ENCODE measurements at regions of chrX and their contacts with region 1.

Region 1: DNA sequence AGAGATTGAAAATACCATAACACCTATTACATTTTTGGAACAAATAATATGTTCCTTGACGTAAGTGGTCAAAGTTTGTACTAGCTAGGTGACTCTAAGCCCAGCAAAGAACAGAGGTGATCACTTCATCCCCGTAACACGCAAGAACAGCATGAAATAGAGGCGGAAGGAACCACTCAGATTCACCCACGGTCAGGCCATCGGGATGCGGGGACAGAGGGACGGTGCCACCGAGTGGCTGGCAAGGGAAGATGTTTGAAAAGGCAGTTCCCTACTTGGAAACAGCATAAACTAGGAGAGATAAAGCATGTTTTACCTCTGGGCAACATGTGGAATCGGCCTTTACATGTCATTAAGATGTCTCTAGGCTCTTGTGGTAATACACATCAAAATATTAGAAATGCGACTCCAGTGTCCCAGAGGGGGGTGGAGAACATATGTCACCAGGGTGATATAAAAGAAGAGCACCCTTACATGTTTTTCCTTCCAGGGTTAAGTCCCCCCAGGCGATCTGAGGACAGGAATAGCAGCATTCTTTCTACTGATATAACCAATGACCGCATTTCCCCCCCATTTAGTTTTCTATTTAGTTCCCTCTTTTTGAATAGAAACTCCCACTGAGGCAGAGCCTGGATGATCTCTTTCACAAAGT is 84.0 kb downstream of the PHKA2 start:
- DNase-seq: peak in 1 of 2 experiments; percentile 15
- H3K4me3 ChIP-seq: no peak overlapping the region
- H3K27ac ChIP-seq: no peak overlapping the region
- H3K4me1 ChIP-seq: no peaks in the 10 kb centered on the region
- H3K27me3 ChIP-seq: no peaks in the 10 kb centered on the region
- CTCF ChIP-seq: peak; percentile 45; the same call in 1 of the 2 replicates

Region 2: DNA sequence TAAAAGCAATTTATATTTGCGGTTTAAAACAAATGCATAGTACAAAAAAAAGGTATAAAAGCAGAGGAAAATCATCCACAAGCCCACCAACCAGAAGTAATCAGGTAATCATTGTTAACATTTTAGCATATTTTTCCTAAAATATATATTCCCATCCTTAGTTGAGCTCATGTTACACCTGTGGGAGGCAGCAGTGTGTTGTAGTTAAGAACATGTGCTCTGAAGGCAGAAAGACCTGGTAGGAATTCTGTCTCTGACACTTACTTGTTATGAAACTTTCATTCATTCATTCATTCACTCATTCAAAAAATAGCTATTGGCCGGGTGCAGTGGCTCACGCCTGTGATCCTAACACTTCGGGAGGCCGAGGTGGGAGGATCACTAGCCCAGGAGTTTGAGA is 489.9 kb before region 1 on chrX:
- CTCF ChIA-PET with region 1: no interaction called
- POLR2A ChIA-PET with region 1: no interaction called
- intact Hi-C with region 1: loop called (anchors 5 kb)
- DNase-seq: no peak
- H3K4me3 ChIP-seq: no peak overlapping the region
- H3K27ac ChIP-seq: no peak overlapping the region
- H3K4me1 ChIP-seq: no peaks in the 10 kb centered on the region
- H3K27me3 ChIP-seq: no peaks in the 10 kb centered on the region
- CTCF ChIP-seq: peak; percentile 56

Region 3: GRCh38 chrX:18938710-18939109 is 38.8 kb after region 1 on chrX:
- CTCF ChIA-PET with region 1: no interaction called
- POLR2A ChIA-PET with region 1: no interaction called
- intact Hi-C with region 1: no loop called
- DNase-seq: peak in 1 of 2 experiments; percentile 39
- H3K4me3 ChIP-seq: no peak overlapping the region
- H3K27ac ChIP-seq: no peak overlapping the region
- H3K4me1 ChIP-seq: no peaks in the 10 kb centered on the region
- H3K27me3 ChIP-seq: no peaks in the 10 kb centered on the region
- CTCF ChIP-seq: no peak

Region 4: DNA sequence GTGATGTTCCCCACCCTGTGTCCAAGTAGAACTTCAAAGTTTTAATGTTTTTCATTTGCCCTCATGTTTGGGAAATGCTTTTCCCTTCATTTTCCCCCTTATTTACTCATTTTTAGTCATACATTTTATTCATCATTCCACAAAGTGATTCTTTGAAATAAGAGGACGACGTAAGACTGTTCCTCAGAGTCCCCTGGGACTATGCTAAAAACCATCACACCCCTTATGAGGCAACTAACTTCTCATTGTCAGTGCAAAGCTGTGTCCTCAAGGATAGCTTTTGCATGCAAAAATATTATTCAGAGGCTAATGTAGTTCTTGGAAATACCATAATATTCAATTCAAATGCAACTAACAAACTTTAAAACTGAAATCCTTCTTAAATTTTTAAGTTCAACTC is 237.1 kb after region 1 on chrX:
- CTCF ChIA-PET with region 1: no interaction called
- POLR2A ChIA-PET with region 1: no interaction called
- intact Hi-C with region 1: no loop called
- DNase-seq: no peak
- H3K4me3 ChIP-seq: no peak overlapping the region
- H3K27ac ChIP-seq: no peak overlapping the region
- H3K4me1 ChIP-seq: no peaks in the 10 kb centered on the region
- H3K27me3 ChIP-seq: peaks cover 18% of the 10 kb centered on the region
- CTCF ChIP-seq: no peak

Measured in PC-9 (cell line).